ENCODE measurements at regions of chr11 and their contacts with region 1.

Region 1: GRCh38 chr11:74559934-74560309 is 32.5 kb upstream of the POLD3 start:
- DNase-seq: no peak
- ATAC-seq: no peak

Region 2: DNA sequence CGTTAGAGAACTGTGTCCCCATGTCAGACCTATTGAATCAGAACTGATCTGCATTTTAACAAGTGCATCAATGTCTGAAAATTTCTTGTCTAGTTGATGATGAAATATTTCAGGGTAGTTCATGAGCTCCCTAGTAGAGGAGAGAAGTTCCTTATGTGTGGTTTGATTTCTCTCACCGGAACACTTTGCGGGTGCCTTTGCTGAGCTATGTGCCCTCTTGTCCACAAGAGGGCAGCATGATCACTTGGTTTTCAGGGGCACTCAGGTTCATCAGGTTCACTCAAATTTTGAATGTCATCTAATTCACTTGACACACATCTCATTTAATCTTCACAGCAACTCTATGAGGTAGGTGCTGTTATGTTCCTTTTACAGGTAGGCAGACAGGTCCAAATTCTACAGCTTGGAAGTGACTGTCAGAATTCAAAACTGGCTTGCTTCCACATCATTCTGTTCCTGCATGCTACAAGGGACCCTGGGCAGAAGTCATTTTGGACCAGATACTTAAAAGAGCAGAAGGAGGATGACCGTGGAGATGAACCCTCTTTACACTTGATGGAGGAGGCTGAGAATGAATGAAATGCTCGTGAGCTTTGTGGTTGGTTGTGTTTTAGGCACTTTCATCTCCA is 304.1 kb before region 1 on chr11:
- intact Hi-C with region 1: loop called (anchors 10 kb)
- DNase-seq: no peak
- ATAC-seq: peak; percentile 50